BJ (cell line): ENCODE measurements at regions of chr9 and their contacts with region 1.

Region 1: DNA sequence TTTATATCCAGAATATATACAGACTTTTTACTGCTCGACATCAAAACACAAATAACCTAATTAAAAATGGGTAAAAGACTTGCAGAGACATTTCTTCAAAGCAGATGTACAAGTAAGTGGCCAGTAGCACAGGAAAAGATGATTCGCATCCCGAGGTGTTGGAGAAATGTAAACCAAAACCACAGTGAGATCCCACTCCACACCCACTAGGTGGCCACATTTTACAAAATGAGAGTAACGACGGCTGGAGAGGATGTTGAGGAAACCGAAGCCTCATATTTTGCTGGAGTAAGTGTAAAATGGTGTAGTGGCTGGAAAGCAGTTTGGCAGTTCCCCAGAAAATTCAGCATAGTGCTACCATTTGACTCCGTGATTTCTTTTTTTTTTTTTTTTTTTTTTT is 21.2 kb upstream of the GBGT1 start:
- DNase-seq: peak; percentile 13
- H3K4me3 ChIP-seq: no peak overlapping the region
- H3K27me3 ChIP-seq: peaks cover 19% of the 10 kb centered on the region
- CTCF ChIP-seq: peak; percentile 58

Region 2: GRCh38 chr9:133121198-133121939 is 63.6 kb before region 1 on chr9 and contains the start of gene RALGDS:
- CTCF ChIA-PET with region 1: no interaction called
- POLR2A ChIA-PET with region 1: no interaction called
- DNase-seq: no peak
- H3K4me3 ChIP-seq: peak within 1 kb of the TSS; percentile 57
- H3K27me3 ChIP-seq: no peaks in the 10 kb centered on the region
- CTCF ChIP-seq: no peak
- polyA plus RNA-seq, gene RALGDS: 18.0 and 25.1 TPM in 2 replicates

Region 3: GRCh38 chr9:133170716-133171559 is 14.0 kb before region 1 on chr9:
- CTCF ChIA-PET with region 1: interaction called, 29 read pairs
- POLR2A ChIA-PET with region 1: no interaction called
- DNase-seq: no peak
- H3K4me3 ChIP-seq: no peak overlapping the region
- H3K27me3 ChIP-seq: peaks cover 11% of the 10 kb centered on the region
- CTCF ChIP-seq: no peak

Region 4: DNA sequence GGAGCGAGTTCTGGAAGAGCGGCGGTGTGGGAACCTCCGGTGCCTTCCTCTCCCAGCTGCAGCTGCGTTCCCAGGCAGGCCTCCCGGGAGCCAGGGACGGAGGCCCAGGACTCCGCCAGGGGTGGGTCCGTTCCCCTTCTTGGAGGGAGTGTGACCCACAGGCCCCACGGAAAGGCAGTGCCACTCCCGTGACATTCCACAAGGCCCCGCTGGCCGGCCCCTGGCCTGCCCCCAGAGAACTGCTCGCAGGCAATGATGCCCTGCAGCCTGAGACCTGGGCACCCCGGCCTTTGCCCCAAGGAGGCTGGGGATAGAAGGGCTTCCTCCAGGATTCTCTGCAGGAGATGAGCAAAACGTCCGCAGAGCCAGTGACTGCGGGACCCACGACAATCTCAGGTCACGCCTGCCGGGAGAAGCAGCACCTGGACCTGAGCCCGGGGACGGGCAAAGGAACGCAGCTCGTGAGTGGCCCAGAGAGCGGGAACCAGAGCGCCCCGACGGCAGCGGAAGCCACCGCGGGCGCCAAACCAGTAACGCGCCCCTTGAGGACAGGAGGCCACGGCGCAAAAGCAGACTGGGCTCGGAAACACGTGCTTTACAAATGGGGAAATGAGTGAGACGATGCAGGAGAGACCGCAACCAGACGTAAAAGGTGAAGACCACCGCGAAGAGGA is 14.8 kb after region 1 on chr9:
- CTCF ChIA-PET with region 1: interaction called, 20 read pairs
- POLR2A ChIA-PET with region 1: no interaction called
- DNase-seq: no peak
- H3K4me3 ChIP-seq: peak overlapping the region; percentile 6; the same call in 1 of the 2 replicates
- H3K27me3 ChIP-seq: peaks cover 1% of the 10 kb centered on the region
- CTCF ChIP-seq: no peak

Region 5: GRCh38 chr9:133331641-133332380 is 146.8 kb after region 1 on chr9:
- CTCF ChIA-PET with region 1: interaction called, 16 read pairs
- POLR2A ChIA-PET with region 1: no interaction called
- DNase-seq: no peak
- H3K4me3 ChIP-seq: no peak overlapping the region
- H3K27me3 ChIP-seq: no peaks in the 10 kb centered on the region
- CTCF ChIP-seq: no peak

Region 6: DNA sequence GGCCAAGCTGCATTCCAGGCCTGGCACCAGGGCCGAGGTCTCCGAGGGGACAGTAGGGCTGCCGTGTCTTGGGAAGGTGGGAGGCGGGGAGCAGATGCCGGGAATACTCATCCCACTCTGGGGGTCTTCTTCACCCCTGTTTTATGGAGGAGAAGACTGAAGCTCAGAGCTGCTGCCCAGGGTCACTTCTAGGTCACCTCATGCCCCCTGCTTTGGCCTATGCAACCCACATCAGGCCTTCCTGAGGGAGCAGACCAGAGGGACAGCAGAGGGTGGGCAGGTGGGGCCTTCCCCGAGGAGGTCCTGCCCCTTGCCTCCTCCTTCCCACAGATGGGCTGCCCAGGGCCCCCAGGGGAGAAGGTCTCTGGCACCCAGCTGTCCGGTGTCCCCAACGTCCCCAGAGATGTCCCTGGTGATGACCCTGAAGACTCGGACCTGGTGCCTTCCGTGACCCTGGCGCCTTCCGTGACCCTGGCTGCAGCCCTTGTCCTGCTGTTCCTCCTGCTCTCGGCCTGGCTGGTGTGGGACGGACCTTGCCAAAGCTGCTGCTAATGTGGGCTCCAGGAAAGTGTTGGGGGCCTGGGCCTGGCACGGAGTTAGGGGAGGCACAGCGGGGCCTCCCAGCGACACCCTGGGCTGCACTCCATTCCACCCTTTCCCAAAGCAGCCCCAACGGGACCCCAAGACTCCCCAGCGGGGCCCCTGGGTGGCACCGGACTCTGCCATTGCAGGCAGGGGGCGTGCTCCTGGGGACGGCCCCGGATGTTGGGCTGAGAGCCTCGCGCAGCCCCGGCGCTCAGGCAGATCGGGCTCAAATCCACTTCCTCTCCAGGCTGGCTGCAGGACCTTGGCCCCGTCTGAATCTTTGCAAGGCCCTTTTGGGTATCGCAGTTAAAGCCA is 300.6 kb after region 1 on chr9:
- CTCF ChIA-PET with region 1: interaction called, 38 read pairs
- POLR2A ChIA-PET with region 1: no interaction called
- DNase-seq: no peak
- H3K4me3 ChIP-seq: no peak overlapping the region
- H3K27me3 ChIP-seq: 0 out of 2 replicates have a peak, but pooled peaks cover 1% of the 10 kb centered on the region
- CTCF ChIP-seq: no peak